Mammary epithelial cell (primary cell): ENCODE measurements at regions of chr15 and their contacts with region 1.

Region 1: GRCh38 chr15:82197733-82198594 is 64.6 kb downstream of the EFL1 start:
- DNase-seq: peak; percentile 48
- H3K4me3 ChIP-seq: no peak overlapping the region
- H3K27ac ChIP-seq: no peak overlapping the region
- H3K4me1 ChIP-seq: no peaks in the 10 kb centered on the region
- H3K27me3 ChIP-seq: no peaks in the 10 kb centered on the region
- CTCF ChIP-seq: peak; percentile 76 to 82

Region 2: DNA sequence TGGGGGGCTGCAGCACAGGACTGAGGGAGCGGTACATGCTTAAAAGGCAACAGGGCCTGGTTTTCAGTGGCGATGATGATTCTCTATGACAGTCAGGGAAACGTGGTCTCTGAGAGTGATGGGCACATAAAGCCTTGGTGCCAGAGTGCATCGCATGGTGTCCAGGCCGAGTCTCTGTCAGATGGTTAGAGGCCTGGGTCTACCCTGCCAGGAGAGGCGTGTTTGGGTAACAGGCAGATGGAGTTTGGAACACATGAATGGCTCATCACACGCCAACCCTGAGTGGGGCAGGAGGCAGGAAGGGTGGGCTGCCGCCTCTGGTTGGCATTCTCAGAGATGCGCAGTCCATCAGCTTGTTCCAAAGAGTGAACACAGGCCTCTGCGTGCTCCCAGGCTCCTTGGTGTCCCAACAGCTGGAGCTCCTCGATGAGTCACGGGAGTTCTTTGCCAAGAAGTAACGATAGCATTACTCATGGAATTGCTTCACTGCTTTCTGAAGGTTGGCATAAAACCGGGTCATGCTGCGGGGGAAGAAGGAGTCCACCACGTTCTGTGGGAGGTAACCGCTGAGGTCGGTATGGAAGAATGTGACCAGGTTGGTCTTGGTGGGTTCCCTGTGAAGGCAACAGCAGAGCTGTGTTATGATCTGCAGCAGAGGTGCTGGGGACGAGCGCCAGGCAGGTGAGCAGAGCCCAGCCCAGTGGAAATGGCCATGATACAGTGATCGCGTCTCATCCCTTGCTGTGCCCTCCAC is 885.0 kb before region 1 on chr15:
- CTCF ChIA-PET with region 1: no interaction called
- dilution Hi-C with region 1: no loop called
- in situ Hi-C with region 1: no loop called
- intact Hi-C with region 1: no loop called
- DNase-seq: peak; percentile 99
- H3K4me3 ChIP-seq: no peak overlapping the region
- H3K27ac ChIP-seq: peak overlapping the region; percentile 57
- H3K4me1 ChIP-seq: peaks cover 20% of the 10 kb centered on the region
- H3K27me3 ChIP-seq: no peaks in the 10 kb centered on the region
- CTCF ChIP-seq: no peak

Region 3: GRCh38 chr15:81410318-81410753 is 787.6 kb before region 1 on chr15:
- CTCF ChIA-PET with region 1: no interaction called
- dilution Hi-C with region 1: no loop called
- in situ Hi-C with region 1: no loop called
- intact Hi-C with region 1: loop called (anchors 2 kb)
- DNase-seq: peak; percentile 68
- H3K4me3 ChIP-seq: no peak overlapping the region
- H3K27ac ChIP-seq: no peak overlapping the region
- H3K4me1 ChIP-seq: no peaks in the 10 kb centered on the region
- H3K27me3 ChIP-seq: no peaks in the 10 kb centered on the region
- CTCF ChIP-seq: peak; percentile 43 to 58

Region 4: DNA sequence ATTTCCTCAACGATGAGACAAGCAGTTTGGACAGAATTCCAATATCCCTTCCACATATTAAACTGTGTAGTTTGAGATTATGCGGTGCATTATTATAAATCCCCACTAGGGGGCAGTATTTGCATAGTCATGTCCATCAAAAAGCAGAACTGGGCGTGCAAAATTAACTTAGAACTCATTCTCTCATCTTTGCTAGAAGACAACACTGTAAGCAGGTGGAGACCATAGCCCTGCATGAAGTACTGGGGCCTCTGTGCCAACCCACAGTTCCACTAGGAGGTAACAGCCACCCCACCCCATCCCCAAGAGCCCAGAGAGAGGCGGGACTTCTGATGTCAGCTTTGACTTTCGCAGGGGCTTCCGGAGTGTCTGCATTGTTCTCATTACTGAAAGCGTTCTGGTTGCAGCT is 717.3 kb before region 1 on chr15:
- CTCF ChIA-PET with region 1: no interaction called
- dilution Hi-C with region 1: no loop called
- in situ Hi-C with region 1: no loop called
- intact Hi-C with region 1: loop called (anchors 5 kb)
- DNase-seq: peak; percentile 27
- H3K4me3 ChIP-seq: no peak overlapping the region
- H3K27ac ChIP-seq: no peak overlapping the region
- H3K4me1 ChIP-seq: no peaks in the 10 kb centered on the region
- H3K27me3 ChIP-seq: no peaks in the 10 kb centered on the region
- CTCF ChIP-seq: peak; percentile 63 to 78

Region 5: GRCh38 chr15:82108489-82109078 is 89.4 kb before region 1 on chr15:
- CTCF ChIA-PET with region 1: interaction called, 14 read pairs
- dilution Hi-C with region 1: no loop called
- in situ Hi-C with region 1: no loop called
- intact Hi-C with region 1: loop called (anchors 1 kb)
- DNase-seq: peak; percentile 57
- H3K4me3 ChIP-seq: no peak overlapping the region
- H3K27ac ChIP-seq: no peak overlapping the region
- H3K4me1 ChIP-seq: peaks cover 13% of the 10 kb centered on the region
- H3K27me3 ChIP-seq: no peaks in the 10 kb centered on the region
- CTCF ChIP-seq: peak; percentile 93 to 97

Region 6: GRCh38 chr15:82139823-82140268 is 58.1 kb before region 1 on chr15:
- CTCF ChIA-PET with region 1: interaction called, 7 read pairs
- dilution Hi-C with region 1: no loop called
- in situ Hi-C with region 1: no loop called
- intact Hi-C with region 1: loop called (anchors 5 kb)
- DNase-seq: peak; percentile 36
- H3K4me3 ChIP-seq: no peak overlapping the region
- H3K27ac ChIP-seq: no peak overlapping the region
- H3K4me1 ChIP-seq: peaks cover 9% of the 10 kb centered on the region
- H3K27me3 ChIP-seq: no peaks in the 10 kb centered on the region
- CTCF ChIP-seq: peak; percentile 68 to 72

Region 7: GRCh38 chr15:82159922-82160321 is 38.0 kb before region 1 on chr15:
- CTCF ChIA-PET with region 1: no interaction called
- dilution Hi-C with region 1: no loop called
- in situ Hi-C with region 1: no loop called
- intact Hi-C with region 1: no loop called
- DNase-seq: peak; percentile 81
- H3K4me3 ChIP-seq: no peak overlapping the region
- H3K27ac ChIP-seq: peak overlapping the region; percentile 61
- H3K4me1 ChIP-seq: peaks cover 16% of the 10 kb centered on the region
- H3K27me3 ChIP-seq: no peaks in the 10 kb centered on the region
- CTCF ChIP-seq: no peak

Region 8: GRCh38 chr15:82181371-82181770 is 16.6 kb before region 1 on chr15:
- CTCF ChIA-PET with region 1: interaction called, 11 read pairs
- dilution Hi-C with region 1: no loop called
- in situ Hi-C with region 1: no loop called
- intact Hi-C with region 1: no loop called
- DNase-seq: no peak
- H3K4me3 ChIP-seq: no peak overlapping the region
- H3K27ac ChIP-seq: no peak overlapping the region
- H3K4me1 ChIP-seq: peaks cover 28% of the 10 kb centered on the region
- H3K27me3 ChIP-seq: no peaks in the 10 kb centered on the region
- CTCF ChIP-seq: no peak